ENCODE measurements at regions of chr19 and their contacts with region 1.

Region 1: DNA sequence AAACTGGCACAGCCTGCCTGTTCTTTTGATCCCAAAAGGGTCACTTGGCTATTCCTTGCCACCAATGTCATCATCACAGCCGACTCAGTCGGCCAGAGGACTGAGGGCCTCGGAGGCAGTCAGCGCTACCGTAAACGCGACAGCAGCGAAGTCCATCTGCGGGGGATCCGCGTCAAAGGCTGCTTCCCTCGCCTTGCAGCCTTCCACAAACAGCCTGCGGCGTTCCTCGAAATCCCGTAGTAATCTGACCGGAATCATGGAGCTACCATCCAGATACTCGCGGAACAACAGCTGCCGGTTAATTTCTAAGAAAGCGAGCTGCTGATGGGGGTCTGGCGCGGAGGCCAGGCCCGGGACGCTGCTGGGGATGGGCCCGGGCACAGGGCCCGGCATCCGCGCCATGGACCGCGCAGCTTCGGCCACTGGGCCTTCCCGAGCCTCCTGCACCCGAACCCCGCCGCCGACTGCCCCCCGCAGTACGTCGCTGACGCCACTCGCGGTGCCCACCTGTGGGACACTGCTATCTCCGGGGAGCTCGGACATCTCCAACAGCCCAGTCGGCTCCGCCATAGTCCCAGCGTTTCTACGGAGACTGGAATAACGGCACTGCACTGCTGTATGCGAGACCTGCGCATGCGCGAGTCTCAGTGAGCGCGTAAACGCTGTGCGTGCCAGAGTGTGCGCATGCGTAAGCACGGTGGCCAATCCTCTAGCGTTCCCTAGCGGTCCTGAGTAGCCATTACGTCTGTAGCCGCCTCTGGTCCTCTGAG is at the start of gene EID2B:
- DNase-seq: peak; percentile 88
- ATAC-seq: peak; percentile 99
- H3K4me3 Mint-ChIP-seq: peak within 1 kb of the TSS; percentile 95
- H3K27ac Mint-ChIP-seq: peak within 1 kb of the TSS; percentile 86
- H3K4me1 Mint-ChIP-seq: peaks cover 18% of the 10 kb centered on the region
- H3K27me3 Mint-ChIP-seq: no peaks in the 10 kb centered on the region
- CTCF ChIP-seq: peak; percentile 96
- total RNA-seq, gene EID2B: 3.3 and 4.0 TPM in 2 replicates

Region 2: GRCh38 chr19:38224014-38224862 is 1308.2 kb before region 1 on chr19 and contains the start of gene DPF1:
- CTCF ChIA-PET with region 1: no interaction called
- POLR2A ChIA-PET with region 1: no interaction called
- intact Hi-C with region 1: no loop called
- DNase-seq: peak; percentile 64
- ATAC-seq: peak; percentile 88
- H3K4me3 Mint-ChIP-seq: peak within 1 kb of the TSS; percentile 85
- H3K27ac Mint-ChIP-seq: peak within 1 kb of the TSS; percentile 66
- H3K4me1 Mint-ChIP-seq: peaks cover 35% of the 10 kb centered on the region
- H3K27me3 Mint-ChIP-seq: peaks cover 52% of the 10 kb centered on the region
- CTCF ChIP-seq: no peak
- total RNA-seq, gene DPF1: not detected in 2 replicates

Region 3: GRCh38 chr19:39125554-39126311 is 406.7 kb before region 1 on chr19 and contains the start of gene PAK4:
- CTCF ChIA-PET with region 1: interaction called, 12 read pairs
- POLR2A ChIA-PET with region 1: no interaction called
- intact Hi-C with region 1: loop called (anchors 1 kb)
- DNase-seq: peak; percentile 95
- ATAC-seq: peak; percentile 98
- H3K4me3 Mint-ChIP-seq: peak within 1 kb of the TSS; percentile 94
- H3K27ac Mint-ChIP-seq: peak within 1 kb of the TSS; percentile 93
- H3K4me1 Mint-ChIP-seq: peaks cover 42% of the 10 kb centered on the region
- H3K27me3 Mint-ChIP-seq: peaks cover 5% of the 10 kb centered on the region
- CTCF ChIP-seq: no peak
- total RNA-seq, gene PAK4: 13.7 and 14.2 TPM in 2 replicates

Region 4: GRCh38 chr19:39341719-39342604 is 190.5 kb before region 1 on chr19 and contains the start of gene SAMD4B:
- CTCF ChIA-PET with region 1: no interaction called
- POLR2A ChIA-PET with region 1: no interaction called
- intact Hi-C with region 1: loop called (anchors 5 kb)
- DNase-seq: peak; percentile 97
- ATAC-seq: peak; percentile 91
- H3K4me3 Mint-ChIP-seq: peak within 1 kb of the TSS; percentile 99
- H3K27ac Mint-ChIP-seq: peak within 1 kb of the TSS; percentile 97
- H3K4me1 Mint-ChIP-seq: peaks cover 69% of the 10 kb centered on the region
- H3K27me3 Mint-ChIP-seq: no peaks in the 10 kb centered on the region
- CTCF ChIP-seq: no peak
- total RNA-seq, gene SAMD4B: 53.0 and 60.7 TPM in 2 replicates

Region 5: DNA sequence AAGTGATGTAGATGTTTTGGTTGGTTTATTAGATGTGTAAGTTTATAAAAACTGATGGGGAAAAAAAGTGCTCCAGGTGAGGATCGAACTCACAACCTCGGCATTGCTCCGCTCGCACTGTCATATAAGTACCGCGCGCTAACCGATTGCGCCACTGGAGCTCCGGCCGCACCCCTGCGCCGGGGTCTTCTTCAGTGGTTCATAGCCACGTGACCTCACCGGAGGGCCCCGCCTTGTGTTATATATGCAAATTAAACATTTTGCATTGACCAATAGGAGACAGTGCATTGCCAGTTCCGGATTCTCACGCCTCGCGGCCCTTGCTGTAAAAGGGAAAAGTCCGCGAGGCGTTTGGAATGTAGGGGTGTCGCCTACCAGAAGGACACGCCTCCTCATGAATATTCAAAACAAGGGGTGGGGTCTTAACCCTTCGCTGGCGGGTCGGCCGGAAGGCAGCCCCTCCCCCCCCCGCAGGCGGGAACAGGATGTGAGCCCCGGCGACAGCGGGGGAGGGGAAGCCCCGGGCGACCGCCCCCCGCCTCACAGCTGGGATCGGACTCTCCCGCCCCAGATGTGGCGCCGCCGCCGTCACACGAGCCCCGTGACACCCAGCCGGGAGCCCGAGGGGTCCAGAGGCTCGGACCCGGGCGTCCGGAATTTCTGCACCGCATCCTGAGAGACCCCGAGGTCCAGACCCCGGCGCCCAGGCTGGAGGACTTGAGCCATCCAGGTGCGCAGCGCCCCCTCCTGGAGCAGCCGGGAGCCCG is 120.1 kb before region 1 on chr19 and contains the start of gene PLEKHG2:
- CTCF ChIA-PET with region 1: no interaction called
- POLR2A ChIA-PET with region 1: interaction called, 4 read pairs
- intact Hi-C with region 1: loop called (anchors 1 kb)
- DNase-seq: peak; percentile 97
- ATAC-seq: peak; percentile 59
- H3K4me3 Mint-ChIP-seq: peak within 1 kb of the TSS; percentile 89
- H3K27ac Mint-ChIP-seq: peak within 1 kb of the TSS; percentile 98
- H3K4me1 Mint-ChIP-seq: peaks cover 59% of the 10 kb centered on the region
- H3K27me3 Mint-ChIP-seq: peaks cover 4% of the 10 kb centered on the region
- CTCF ChIP-seq: no peak
- total RNA-seq, gene PLEKHG2: 111 and 125 TPM in 2 replicates

Region 6: DNA sequence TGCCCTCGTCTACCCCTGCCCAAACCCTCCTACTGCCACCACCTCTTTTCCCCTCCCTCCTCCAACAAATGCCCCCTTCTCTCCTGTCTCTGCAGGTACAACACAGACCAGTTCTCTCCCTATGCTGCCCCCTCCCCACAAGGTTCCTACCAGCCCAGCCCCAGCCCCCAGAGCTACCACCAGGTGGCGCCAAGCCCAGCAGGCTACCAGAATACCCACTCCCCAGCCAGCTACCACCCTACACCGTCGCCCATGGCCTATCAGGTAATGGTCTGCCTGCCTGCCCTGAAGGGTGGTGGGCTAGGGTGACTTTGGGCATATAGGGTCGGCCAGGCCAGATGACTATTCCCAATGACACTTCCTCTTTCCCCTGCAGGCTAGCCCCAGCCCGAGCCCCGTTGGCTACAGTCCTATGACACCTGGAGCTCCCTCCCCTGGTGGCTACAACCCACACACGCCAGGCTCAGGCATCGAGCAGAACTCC is 58.2 kb before region 1 on chr19:
- CTCF ChIA-PET with region 1: interaction called, 17 read pairs
- POLR2A ChIA-PET with region 1: interaction called, 3 read pairs
- intact Hi-C with region 1: loop called (anchors 1 kb)
- DNase-seq: peak; percentile 71
- ATAC-seq: peak; percentile 88
- H3K4me3 Mint-ChIP-seq: no peak overlapping the region
- H3K27ac Mint-ChIP-seq: no peak overlapping the region
- H3K4me1 Mint-ChIP-seq: no peaks in the 10 kb centered on the region
- H3K27me3 Mint-ChIP-seq: no peaks in the 10 kb centered on the region
- CTCF ChIP-seq: no peak

Measured in activated B cell treated with CpG ODN at 0.5 μM for 24 hours (primary cell).